ENCODE measurements at regions of chr3 and their contacts with region 1.

Region 1: DNA sequence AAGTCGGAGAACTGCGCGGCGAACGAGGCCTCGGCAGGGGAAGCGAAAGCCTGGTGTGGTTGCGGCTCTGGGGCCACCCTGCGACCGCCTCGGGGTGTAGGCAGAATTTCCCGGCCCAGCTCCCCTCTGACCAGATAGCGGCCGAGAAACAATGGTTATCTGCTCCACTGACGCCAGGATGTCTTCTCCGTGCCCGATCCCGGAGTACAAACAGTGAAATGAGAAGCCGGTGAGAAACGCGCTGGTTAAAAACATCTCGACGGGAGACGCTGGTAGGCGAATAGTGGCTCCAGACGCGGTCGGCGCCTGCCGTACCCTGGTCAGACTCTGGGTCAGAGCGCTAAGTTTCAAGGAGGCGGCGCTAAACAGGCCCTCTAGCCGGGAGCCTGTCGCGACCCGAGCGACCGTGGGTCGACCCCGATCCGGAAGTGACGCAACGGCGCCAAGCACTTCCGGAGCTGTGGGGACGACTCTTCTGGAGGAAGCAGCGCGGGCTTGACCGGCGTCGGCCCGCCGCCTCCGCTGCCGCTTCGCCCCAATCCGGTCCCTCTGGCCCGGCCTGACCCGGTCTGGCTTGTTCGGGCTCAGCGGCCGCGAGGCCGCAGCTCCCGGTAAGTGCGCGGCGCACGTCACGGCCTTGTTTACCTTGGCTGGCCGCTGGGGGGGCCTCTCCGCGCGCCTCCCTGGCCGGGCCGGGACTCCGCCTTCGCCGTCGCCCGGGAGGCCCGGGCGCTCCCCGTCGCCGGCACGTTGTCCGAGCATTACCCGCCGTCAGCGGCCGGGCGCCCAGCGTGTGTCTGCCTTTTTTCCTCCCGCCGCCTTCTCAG is at the start of gene ARIH2:
- DNase-seq: peak; percentile 92 to 93
- H3K4me3 ChIP-seq: peak within 1 kb of the TSS; percentile 61
- H3K4me3 Mint-ChIP-seq: peak within 1 kb of the TSS; percentile 97
- H3K27ac Mint-ChIP-seq: peak within 1 kb of the TSS; percentile 98
- H3K4me1 ChIP-seq: no peaks in the 10 kb centered on the region
- H3K4me1 Mint-ChIP-seq: no peaks in the 10 kb centered on the region
- H3K27me3 ChIP-seq: no peaks in the 10 kb centered on the region
- H3K27me3 Mint-ChIP-seq: no peaks in the 10 kb centered on the region
- CTCF ChIP-seq: no peak
- total RNA-seq, gene ARIH2: 106 and 133 TPM in 2 replicates

Region 2: GRCh38 chr3:48716982-48717746 is 201.4 kb before region 1 on chr3 and contains the start of gene IP6K2:
- CTCF ChIA-PET with region 1: no interaction called
- POLR2A ChIA-PET with region 1: interaction called, 7 read pairs
- intact Hi-C with region 1: loop called (anchors 10 kb)
- DNase-seq: peak; percentile 99
- H3K4me3 ChIP-seq: peak within 1 kb of the TSS; percentile 55
- H3K4me3 Mint-ChIP-seq: peak within 1 kb of the TSS; percentile 66
- H3K27ac Mint-ChIP-seq: peak within 1 kb of the TSS; percentile 88
- H3K4me1 ChIP-seq: peaks cover 41% of the 10 kb centered on the region
- H3K4me1 Mint-ChIP-seq: peaks cover 42% of the 10 kb centered on the region
- H3K27me3 ChIP-seq: no peaks in the 10 kb centered on the region
- H3K27me3 Mint-ChIP-seq: no peaks in the 10 kb centered on the region
- CTCF ChIP-seq: no peak
- total RNA-seq, gene IP6K2: 91.7 and 100 TPM in 2 replicates

Region 3: DNA sequence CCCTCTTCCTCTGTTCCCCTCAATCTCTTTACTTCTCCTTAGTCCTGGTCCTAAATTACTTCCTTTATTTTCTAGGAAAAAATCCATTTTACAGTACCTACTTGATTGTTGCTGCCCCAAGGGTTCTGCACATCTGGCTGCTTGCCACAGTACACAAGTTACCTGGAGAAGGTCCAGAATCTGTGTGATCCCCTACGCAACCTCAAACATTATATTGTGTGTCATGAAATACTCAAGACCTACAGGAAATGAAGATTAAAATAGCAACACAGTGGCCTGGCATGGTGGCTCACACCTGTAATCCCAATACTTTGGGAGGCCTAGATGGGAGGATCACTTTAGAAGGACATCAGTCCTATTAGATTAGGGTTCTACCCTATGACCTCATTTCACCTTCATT is 119.6 kb before region 1 on chr3:
- CTCF ChIA-PET with region 1: no interaction called
- POLR2A ChIA-PET with region 1: no interaction called
- intact Hi-C with region 1: no loop called
- DNase-seq: no peak
- H3K4me3 ChIP-seq: no peak overlapping the region
- H3K4me3 Mint-ChIP-seq: no peak overlapping the region
- H3K27ac Mint-ChIP-seq: no peak overlapping the region
- H3K4me1 ChIP-seq: no peaks in the 10 kb centered on the region; the same call in 1 of the 2 replicates
- H3K4me1 Mint-ChIP-seq: peaks cover 7% of the 10 kb centered on the region
- H3K27me3 ChIP-seq: no peaks in the 10 kb centered on the region
- H3K27me3 Mint-ChIP-seq: no peaks in the 10 kb centered on the region
- CTCF ChIP-seq: no peak

Region 4: GRCh38 chr3:48847504-48848423 is 70.8 kb before region 1 on chr3 and contains the start of gene PRKAR2A:
- CTCF ChIA-PET with region 1: no interaction called
- POLR2A ChIA-PET with region 1: interaction called, 5 read pairs
- intact Hi-C with region 1: loop called (anchors 5 kb)
- DNase-seq: peak; percentile 78 to 89
- H3K4me3 ChIP-seq: peak within 1 kb of the TSS; percentile 72
- H3K4me3 Mint-ChIP-seq: peak within 1 kb of the TSS; percentile 92
- H3K27ac Mint-ChIP-seq: peak within 1 kb of the TSS; percentile 60
- H3K4me1 ChIP-seq: no peaks in the 10 kb centered on the region
- H3K4me1 Mint-ChIP-seq: no peaks in the 10 kb centered on the region
- H3K27me3 ChIP-seq: no peaks in the 10 kb centered on the region
- H3K27me3 Mint-ChIP-seq: no peaks in the 10 kb centered on the region
- CTCF ChIP-seq: no peak
- total RNA-seq, gene PRKAR2A: 56.3 and 67.3 TPM in 2 replicates

Region 5: GRCh38 chr3:48898383-48899234 is 20.0 kb before region 1 on chr3 and contains the start of gene SLC25A20:
- CTCF ChIA-PET with region 1: no interaction called
- POLR2A ChIA-PET with region 1: interaction called, 8 read pairs
- intact Hi-C with region 1: loop called (anchors 2 kb)
- DNase-seq: peak; percentile 91 to 95
- H3K4me3 ChIP-seq: peak within 1 kb of the TSS; percentile 66
- H3K4me3 Mint-ChIP-seq: peak within 1 kb of the TSS; percentile 92
- H3K27ac Mint-ChIP-seq: peak within 1 kb of the TSS; percentile 46
- H3K4me1 ChIP-seq: peaks cover 17% of the 10 kb centered on the region
- H3K4me1 Mint-ChIP-seq: peaks cover 24% of the 10 kb centered on the region
- H3K27me3 ChIP-seq: no peaks in the 10 kb centered on the region
- H3K27me3 Mint-ChIP-seq: no peaks in the 10 kb centered on the region
- CTCF ChIP-seq: no peak
- total RNA-seq, gene SLC25A20: 17.0 and 19.3 TPM in 2 replicates

Measured in Caco-2 (cell line).